ENCODE measurements at regions of chr6 and their contacts with region 1.

Region 1: GRCh38 chr6:52650941-52651340 is 20.0 kb upstream of the TMEM14A start:
- DNase-seq: no peak
- H3K4me3 ChIP-seq: no peak overlapping the region
- H3K4me3 Mint-ChIP-seq: no peak overlapping the region
- H3K27ac ChIP-seq: no peak overlapping the region
- H3K27ac Mint-ChIP-seq: peak overlapping the region in 1 of 8 donors; percentile 35
- H3K4me1 ChIP-seq: no peaks in the 10 kb centered on the region
- H3K4me1 Mint-ChIP-seq: peaks cover 5 to 9% (median 8%) of the 10 kb centered on the region in 3 donors
- H3K27me3 ChIP-seq: peaks cover 5% of the 10 kb centered on the region
- H3K27me3 Mint-ChIP-seq: peaks cover 11 to 34% of the 10 kb centered on the region in 2 donors

Region 2: GRCh38 chr6:52640170-52640569 is 10.8 kb before region 1 on chr6:
- CTCF ChIA-PET with region 1: interaction called, 21 read pairs
- POLR2A ChIA-PET with region 1: no interaction called
- DNase-seq: no peak
- H3K4me3 ChIP-seq: no peak overlapping the region
- H3K4me3 Mint-ChIP-seq: no peak overlapping the region
- H3K27ac ChIP-seq: no peak overlapping the region
- H3K27ac Mint-ChIP-seq: no peak overlapping the region
- H3K4me1 ChIP-seq: no peaks in the 10 kb centered on the region
- H3K4me1 Mint-ChIP-seq: peaks cover 3 to 4% (median 4%) of the 10 kb centered on the region in 3 donors
- H3K27me3 ChIP-seq: no peaks in the 10 kb centered on the region
- H3K27me3 Mint-ChIP-seq: peaks cover 14 to 36% of the 10 kb centered on the region in 2 donors

Region 3: DNA sequence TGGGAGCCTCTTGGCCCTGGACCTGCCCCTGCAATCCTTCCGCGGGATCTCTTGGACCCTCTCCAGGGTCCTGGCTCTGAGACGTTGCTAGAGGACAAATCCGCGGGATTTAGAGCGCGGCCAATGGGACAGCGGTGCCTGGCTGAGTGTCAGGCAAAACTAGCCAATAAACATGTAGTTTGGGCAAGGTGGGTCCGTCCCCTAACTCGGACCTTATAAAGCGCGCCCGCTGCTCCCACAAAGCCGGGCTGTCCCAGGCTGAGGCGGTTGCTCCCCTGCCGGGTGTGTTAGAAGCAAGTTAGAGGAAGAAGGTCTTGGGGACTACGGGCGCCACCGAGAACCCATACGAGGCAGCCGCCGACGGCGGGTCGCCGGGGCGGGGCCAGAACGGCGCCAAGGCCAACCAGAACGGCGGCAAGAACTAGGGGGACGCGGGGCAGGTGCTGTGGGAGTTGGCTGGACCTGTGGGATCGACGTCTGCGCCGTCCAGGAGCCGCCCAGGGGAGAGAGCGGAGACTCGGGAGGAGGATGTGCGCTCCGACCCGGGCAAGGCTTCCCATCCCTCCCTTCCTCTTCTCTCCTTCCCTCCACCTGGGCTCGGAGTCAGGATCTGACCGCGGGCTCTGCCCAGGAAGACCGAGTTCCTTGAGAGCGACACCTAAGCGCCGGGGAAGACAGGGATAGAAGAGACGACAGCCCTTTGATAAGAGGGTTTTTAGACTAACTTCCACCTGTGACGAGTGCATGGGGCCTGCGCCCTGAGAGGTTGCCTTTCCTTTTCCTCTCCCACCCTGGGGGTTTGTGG is 13.4 kb after region 1 on chr6:
- CTCF ChIA-PET with region 1: interaction called, 60 read pairs
- POLR2A ChIA-PET with region 1: no interaction called
- DNase-seq: peak in 4 of 5 donors; percentile 21 to 56 (median 30)
- H3K4me3 ChIP-seq: peak overlapping the region; percentile 72
- H3K4me3 Mint-ChIP-seq: no peak overlapping the region
- H3K27ac ChIP-seq: no peak overlapping the region
- H3K27ac Mint-ChIP-seq: no peak overlapping the region
- H3K4me1 ChIP-seq: peaks cover 4% of the 10 kb centered on the region
- H3K4me1 Mint-ChIP-seq: peaks cover 0 to 3% (median 0%) of the 10 kb centered on the region in 3 donors
- H3K27me3 ChIP-seq: no peaks in the 10 kb centered on the region
- H3K27me3 Mint-ChIP-seq: no peaks in the 10 kb centered on the region

Measured in CD8-positive, alpha-beta memory T cell (primary cell).